ENCODE measurements at regions of chr6 and their contacts with region 1.

Region 1: GRCh38 chr6:33788694-33789549 is at the start of gene LEMD2:
- DNase-seq: peak; percentile 92
- H3K4me3 Mint-ChIP-seq: peak within 1 kb of the TSS; percentile 93
- H3K27ac Mint-ChIP-seq: peak within 1 kb of the TSS; percentile 96
- H3K4me1 Mint-ChIP-seq: peaks cover 43% of the 10 kb centered on the region
- H3K27me3 Mint-ChIP-seq: peaks cover 3% of the 10 kb centered on the region
- total RNA-seq, gene LEMD2: 63.6 and 64.4 TPM in 2 replicates

Region 2: DNA sequence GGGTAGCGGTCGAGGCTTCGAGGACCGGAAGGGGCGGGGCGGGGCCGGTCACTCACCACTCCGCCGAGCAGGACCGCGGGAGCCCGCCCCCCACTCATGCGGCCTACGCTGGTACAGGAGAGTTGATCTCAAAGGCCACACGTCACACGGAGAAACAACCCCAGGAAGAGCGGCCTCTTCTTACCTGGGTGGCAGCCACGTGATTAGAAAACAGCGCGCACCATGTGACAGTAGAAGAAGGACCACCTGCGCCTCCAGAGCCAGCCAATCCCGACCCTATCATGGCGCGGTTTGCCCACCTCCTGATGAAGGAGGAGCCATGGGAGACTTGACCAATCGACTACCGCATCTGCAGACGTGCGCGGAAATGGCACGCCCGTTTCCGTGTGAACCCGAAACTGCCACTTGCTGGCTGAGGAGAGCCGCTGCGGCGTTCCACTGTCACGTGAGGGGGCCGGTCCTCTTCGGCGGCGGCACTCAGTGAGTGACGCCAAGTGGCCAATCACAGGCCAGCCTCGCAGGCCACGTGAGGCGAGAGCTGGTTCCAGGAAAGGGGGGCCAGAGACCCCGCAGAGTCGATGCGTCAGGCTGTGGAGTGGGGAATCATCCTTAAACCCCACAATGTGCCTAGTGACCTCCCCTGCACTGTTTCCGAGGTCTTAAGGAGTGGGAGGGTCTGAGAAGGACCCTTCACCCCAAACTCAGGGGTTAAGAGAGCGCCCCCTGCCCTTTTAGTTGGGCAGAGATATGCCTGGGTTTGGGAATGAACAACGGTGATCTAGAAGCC is 370.8 kb before region 1 on chr6 and contains the start of gene CUTA:
- intact Hi-C with region 1: loop called (anchors 10 kb)
- DNase-seq: peak; percentile 98
- H3K4me3 Mint-ChIP-seq: peak within 1 kb of the TSS; percentile 95
- H3K27ac Mint-ChIP-seq: peak within 1 kb of the TSS; percentile 96
- H3K4me1 Mint-ChIP-seq: peaks cover 70% of the 10 kb centered on the region
- H3K27me3 Mint-ChIP-seq: no peaks in the 10 kb centered on the region
- total RNA-seq, gene CUTA: 131 and 137 TPM in 2 replicates

Region 3: DNA sequence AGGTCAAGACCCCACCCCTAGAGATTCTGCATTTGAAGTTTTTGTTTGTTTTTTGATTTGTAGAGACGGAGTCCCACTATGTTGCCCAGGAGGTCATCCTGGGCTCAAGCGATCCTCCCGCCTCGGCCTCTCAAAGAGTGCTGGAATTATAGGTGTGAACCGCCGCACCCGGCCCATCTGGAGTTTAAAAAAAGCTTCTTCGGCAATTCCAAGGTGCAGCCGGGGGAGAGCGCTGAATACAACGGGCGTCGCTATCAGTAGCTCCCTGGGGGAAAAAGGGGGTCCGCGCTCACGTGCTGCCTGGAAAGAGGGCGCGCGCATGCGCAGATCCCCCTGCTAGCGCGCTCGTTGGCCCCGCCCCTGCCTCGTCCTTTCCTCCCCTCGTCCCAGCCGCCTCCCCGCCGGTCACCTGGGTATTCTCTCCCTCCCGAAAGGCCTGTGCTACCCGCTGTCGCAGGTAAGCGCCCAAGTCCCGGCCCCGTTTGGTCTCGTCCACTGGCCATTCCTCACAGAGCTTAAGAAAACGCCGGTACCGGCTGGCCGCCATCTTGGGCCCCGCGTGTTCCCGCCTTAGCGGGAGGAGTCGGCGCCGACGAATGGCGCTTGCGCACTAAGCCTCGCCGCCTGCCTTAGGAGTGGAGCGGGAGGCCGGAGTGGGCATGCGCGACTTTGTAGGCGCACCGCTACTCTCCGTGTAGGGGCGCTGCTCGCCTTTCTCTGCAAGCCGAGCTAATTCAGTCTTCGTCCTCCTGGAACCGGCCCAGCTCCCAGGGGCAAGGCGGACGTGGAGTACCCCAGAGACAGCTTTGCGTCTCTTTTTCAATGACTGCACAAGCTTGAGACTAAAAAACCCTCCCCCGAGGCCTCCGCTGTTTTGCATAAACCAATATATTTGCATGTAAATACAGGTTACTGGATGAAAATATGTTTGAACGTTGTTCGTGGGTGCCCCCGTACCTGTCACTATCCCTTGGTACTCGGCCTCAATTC is 77.5 kb before region 1 on chr6 and contains the start of gene UQCC2:
- intact Hi-C with region 1: loop called (anchors 1 kb)
- DNase-seq: peak; percentile 96
- H3K4me3 Mint-ChIP-seq: peak within 1 kb of the TSS; percentile 95
- H3K27ac Mint-ChIP-seq: peak within 1 kb of the TSS; percentile 99
- H3K4me1 Mint-ChIP-seq: peaks cover 42% of the 10 kb centered on the region
- H3K27me3 Mint-ChIP-seq: peaks cover 3% of the 10 kb centered on the region
- total RNA-seq, gene UQCC2: 123 and 139 TPM in 2 replicates

Region 4: DNA sequence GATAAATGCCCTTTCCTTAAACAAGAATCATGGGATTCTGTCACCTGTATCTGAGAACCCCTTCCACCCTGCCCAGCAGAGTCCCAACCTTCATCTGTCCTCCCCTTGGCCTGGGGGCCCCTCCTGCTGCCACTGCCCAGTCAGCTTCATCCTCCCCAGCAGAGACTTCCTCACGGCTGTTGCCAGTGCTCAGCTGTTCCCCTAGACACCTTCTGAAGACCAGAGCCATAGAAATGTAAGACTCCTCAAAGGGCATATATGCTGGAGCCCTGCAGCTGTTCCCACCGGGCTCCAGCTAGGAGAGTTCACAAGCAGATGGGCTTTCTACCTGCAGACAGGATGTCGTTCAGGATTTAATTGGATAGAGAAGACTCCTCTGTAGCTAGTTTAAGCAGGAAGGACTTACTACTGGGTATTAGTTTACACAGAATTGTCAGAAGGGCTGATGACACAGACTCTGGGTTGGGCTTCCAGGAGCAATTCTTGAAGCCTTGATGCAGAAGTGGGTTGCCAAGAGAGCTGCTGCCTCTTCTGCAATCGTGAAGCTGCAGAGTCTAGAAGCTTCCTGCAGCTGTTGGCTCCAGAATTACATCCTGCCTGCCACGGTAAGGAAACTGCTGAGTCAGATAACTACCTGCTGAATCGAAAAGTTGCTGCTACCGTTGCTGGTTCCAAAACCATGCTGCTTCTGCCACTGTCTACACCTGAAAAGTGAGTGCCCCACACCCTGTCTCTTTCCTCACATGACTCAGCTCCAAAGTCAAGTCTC is 72.0 kb after region 1 on chr6:
- intact Hi-C with region 1: loop called (anchors 5 kb)
- DNase-seq: peak; percentile 51
- H3K4me3 Mint-ChIP-seq: peak overlapping the region; percentile 13
- H3K27ac Mint-ChIP-seq: peak overlapping the region; percentile 36
- H3K4me1 Mint-ChIP-seq: peaks cover 70% of the 10 kb centered on the region
- H3K27me3 Mint-ChIP-seq: peaks cover 2% of the 10 kb centered on the region

Region 5: GRCh38 chr6:34248727-34249551 is 460.0 kb after region 1 on chr6 and contains the start of gene SMIM29:
- intact Hi-C with region 1: loop called (anchors 1 kb)
- DNase-seq: peak; percentile 96
- H3K4me3 Mint-ChIP-seq: peak within 1 kb of the TSS; percentile 87
- H3K27ac Mint-ChIP-seq: peak within 1 kb of the TSS; percentile 87
- H3K4me1 Mint-ChIP-seq: peaks cover 40% of the 10 kb centered on the region
- H3K27me3 Mint-ChIP-seq: peaks cover 1% of the 10 kb centered on the region
- total RNA-seq, gene SMIM29: 14.3 and 15.0 TPM in 2 replicates

Measured in activated T-helper 1 cell treated with anti-CD3 and anti-CD28 coated beads, Interleukin-12 subunit alpha, Interleukin-12 subunit beta, Interleukin-2, Interleukin-4 antibody, amounts not matched to agents 30 ng/mL and 10 ng/mL and 1 ng/mL, durations not matched to agents 14 hours and 24 hours and 36 hours (primary cell).